Activated naive CD4-positive, alpha-beta T cell treated with anti-CD3 and anti-CD28 coated beads for 36 hours (primary cell): ENCODE measurements at regions of chrX and their contacts with region 1.

Region 1: GRCh38 chrX:48801280-48802088 is at the start of gene HDAC6:
- DNase-seq: peak; percentile 96
- H3K4me3 Mint-ChIP-seq: peak within 1 kb of the TSS; percentile 93
- H3K27ac Mint-ChIP-seq: peak within 1 kb of the TSS; percentile 98
- H3K4me1 Mint-ChIP-seq: peaks cover 13% of the 10 kb centered on the region
- H3K27me3 Mint-ChIP-seq: no peaks in the 10 kb centered on the region
- total RNA-seq, gene HDAC6: 91.1 to 99.4 TPM

Region 2: GRCh38 chrX:48475774-48476577 is 325.5 kb before region 1 on chrX and contains the start of gene FTSJ1:
- CTCF ChIA-PET with region 1: no interaction called
- intact Hi-C with region 1: loop called (anchors 10 kb)
- DNase-seq: peak; percentile 86
- H3K4me3 Mint-ChIP-seq: peak within 1 kb of the TSS; percentile 76
- H3K27ac Mint-ChIP-seq: peak within 1 kb of the TSS; percentile 90
- H3K4me1 Mint-ChIP-seq: peaks cover 32% of the 10 kb centered on the region
- H3K27me3 Mint-ChIP-seq: no peaks in the 10 kb centered on the region
- total RNA-seq, gene FTSJ1: 66.2 to 66.8 TPM

Region 3: GRCh38 chrX:48597353-48598264 is 203.9 kb before region 1 on chrX and contains the start of gene WDR13:
- CTCF ChIA-PET with region 1: no interaction called
- intact Hi-C with region 1: loop called (anchors 1 kb)
- DNase-seq: peak; percentile 94
- H3K4me3 Mint-ChIP-seq: peak within 1 kb of the TSS; percentile 97
- H3K27ac Mint-ChIP-seq: peak within 1 kb of the TSS; percentile 97
- H3K4me1 Mint-ChIP-seq: peaks cover 7% of the 10 kb centered on the region
- H3K27me3 Mint-ChIP-seq: no peaks in the 10 kb centered on the region
- total RNA-seq, gene WDR13: 37.0 to 40.1 TPM

Region 4: DNA sequence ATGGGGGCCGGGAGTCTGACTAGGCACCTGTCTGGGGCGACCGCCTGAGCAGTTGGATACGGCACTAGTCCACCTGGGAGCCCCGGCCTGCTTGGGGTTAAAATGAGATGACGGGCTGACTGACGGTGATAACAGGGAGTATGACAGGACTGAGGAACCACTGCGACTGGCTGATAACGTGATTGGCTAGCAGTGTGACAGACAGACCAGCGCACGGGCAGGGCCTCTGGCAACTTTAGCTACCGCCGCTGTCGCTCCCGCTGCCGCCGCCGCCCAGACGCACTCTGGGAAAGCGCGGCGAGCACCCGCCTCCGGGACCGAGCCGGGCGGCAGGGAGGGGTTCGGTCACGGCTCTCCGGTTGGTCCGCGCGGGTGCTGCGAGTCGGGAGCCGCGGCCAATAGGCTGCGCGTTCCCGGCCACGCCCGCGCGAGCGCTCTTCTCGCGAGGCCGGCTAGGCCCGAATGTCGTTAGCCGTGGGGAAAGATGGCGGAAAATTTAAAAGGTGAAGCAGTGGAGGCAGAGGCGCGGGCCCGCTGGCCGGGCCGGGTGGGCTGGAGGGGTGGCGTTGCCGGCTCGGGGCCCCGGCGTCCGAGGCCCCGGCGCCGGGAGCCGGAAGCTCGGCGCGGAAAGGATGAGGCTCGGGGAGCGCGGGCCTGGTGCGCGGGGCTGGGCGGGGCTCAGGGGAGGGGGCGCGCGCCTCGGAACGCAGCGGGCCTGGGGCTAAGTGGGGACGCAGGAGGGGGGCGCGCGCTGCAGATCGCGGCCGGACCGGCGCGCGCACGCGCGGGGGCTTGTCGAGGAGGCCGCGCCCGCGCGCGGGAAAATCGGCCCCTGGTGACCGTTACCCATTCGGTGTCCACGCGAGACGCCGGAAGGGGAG is 104.9 kb before region 1 on chrX and contains the start of gene SUV39H1:
- CTCF ChIA-PET with region 1: no interaction called
- intact Hi-C with region 1: loop called (anchors 1 kb)
- DNase-seq: peak; percentile 87
- H3K4me3 Mint-ChIP-seq: peak within 1 kb of the TSS; percentile 89
- H3K27ac Mint-ChIP-seq: peak within 1 kb of the TSS; percentile 91
- H3K4me1 Mint-ChIP-seq: peaks cover 36% of the 10 kb centered on the region
- H3K27me3 Mint-ChIP-seq: no peaks in the 10 kb centered on the region
- total RNA-seq, gene SUV39H1: 31.5 to 31.9 TPM

Region 5: DNA sequence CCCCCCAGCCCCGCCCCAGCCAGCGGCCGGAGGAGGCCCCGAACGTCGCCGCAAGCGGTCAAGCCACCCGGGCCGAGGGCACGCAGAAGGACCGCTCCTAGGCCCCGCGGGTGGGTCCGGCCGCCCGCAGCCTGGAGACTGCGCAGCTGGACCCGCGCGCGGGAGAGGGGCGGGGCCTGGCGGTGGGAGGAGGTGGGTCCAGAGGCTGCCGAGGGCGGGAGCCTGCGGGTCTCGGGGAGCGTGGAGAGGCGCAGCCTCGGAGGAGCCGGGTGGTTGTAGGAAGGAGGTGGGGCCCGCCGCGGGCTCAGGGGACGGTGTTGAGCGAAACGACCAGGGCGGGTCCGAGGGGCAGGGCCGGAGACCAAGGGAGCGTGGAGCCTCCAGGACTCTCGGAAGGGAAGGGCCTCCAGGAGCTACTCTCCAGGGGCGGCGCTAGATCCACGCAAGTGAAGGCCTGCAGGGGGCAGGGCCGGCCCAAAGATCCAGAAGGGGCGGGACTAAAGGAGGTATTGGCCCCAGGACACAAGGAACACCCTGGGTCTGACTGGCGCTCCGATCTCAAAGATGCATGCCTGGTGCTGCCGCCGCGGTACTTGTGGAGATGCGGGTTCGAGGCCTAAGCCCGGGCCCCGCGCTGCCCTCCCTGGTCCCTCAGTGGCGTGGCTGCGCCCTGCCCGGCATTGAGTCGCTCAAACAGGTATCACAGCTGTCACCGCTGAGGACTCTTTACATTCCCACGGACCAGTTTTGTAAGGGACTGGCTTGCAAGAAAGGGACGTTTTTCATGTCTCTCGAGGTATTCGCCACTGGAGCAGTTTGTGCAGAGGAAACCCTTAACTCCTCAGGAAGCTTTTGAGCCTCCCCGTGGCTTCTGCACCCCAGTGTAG is 90.2 kb after region 1 on chrX:
- CTCF ChIA-PET with region 1: interaction called, 3 read pairs
- intact Hi-C with region 1: loop called (anchors 2 kb)
- DNase-seq: peak; percentile 85
- H3K4me3 Mint-ChIP-seq: peak overlapping the region; percentile 80
- H3K27ac Mint-ChIP-seq: peak overlapping the region; percentile 76
- H3K4me1 Mint-ChIP-seq: peaks cover 25% of the 10 kb centered on the region
- H3K27me3 Mint-ChIP-seq: no peaks in the 10 kb centered on the region

Region 6: DNA sequence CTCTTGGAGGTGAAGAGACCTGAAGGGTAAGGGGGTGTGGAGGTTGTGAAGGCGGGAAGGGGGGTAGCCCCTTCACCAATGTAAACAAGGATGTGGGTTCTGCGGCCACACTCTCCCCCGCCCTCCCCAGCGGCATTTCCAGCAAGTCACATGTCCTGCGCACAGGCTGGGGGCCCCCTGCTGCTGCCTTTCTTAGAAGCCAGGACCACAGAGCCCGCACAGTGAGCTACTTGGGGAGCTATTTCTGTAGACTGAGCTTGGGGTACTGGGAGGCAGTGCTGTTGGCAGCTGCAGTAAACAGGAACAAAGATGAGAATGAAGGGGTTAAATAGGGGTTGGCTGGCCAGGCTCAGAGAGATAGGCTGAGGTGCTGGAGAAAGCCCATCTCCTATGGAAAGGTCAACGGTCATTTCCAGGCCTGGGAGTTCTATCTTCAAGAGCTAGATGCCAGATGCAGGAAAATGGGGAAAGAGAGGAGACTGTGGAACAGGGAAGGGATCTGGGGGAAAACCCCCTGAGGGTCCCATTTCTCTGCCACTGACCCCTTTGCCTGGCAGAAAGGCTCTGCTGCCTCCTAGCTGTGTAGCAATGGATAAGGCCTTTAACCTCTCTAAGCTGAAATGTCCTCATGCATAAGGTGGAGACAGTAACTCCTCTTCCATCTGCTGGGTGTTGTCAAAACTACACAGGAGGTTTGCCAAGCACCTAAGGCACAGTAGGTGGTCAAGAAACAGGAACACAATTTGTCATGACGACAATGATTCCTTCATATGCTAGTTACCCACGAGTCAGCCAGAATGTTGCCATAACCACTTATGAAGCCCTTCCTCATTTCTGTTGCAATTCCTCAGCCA is 135.8 kb after region 1 on chrX:
- CTCF ChIA-PET with region 1: no interaction called
- intact Hi-C with region 1: loop called (anchors 1 kb)
- DNase-seq: peak; percentile 95
- H3K4me3 Mint-ChIP-seq: peak overlapping the region; percentile 75
- H3K27ac Mint-ChIP-seq: peak overlapping the region; percentile 100
- H3K4me1 Mint-ChIP-seq: peaks cover 81% of the 10 kb centered on the region
- H3K27me3 Mint-ChIP-seq: no peaks in the 10 kb centered on the region

Region 7: GRCh38 chrX:48948589-48948988 is 147.1 kb after region 1 on chrX:
- CTCF ChIA-PET with region 1: no interaction called
- intact Hi-C with region 1: no loop called
- DNase-seq: no peak
- H3K4me3 Mint-ChIP-seq: no peak overlapping the region
- H3K27ac Mint-ChIP-seq: no peak overlapping the region
- H3K4me1 Mint-ChIP-seq: peaks cover 49% of the 10 kb centered on the region
- H3K27me3 Mint-ChIP-seq: no peaks in the 10 kb centered on the region

Region 8: DNA sequence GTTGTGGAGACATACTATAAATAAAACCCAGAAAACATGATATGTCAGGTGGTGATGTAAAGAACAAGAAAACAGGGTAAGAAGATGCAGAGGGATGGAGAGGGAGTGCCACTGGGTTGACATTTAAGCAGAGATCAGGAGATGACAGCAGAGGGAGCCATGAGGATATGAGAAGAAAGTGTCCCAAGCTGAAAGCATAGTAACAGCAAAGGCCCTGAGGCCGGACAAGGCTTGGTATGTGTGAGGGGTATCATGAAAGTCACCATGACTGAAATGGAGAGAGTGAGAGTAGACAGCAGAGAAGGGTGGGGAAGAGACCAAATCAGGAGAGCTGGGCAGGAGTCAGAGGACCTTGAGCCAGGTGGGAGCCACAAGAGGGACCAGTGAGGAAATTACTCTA is 318.6 kb after region 1 on chrX:
- CTCF ChIA-PET with region 1: no interaction called
- intact Hi-C with region 1: loop called (anchors 5 kb)
- DNase-seq: no peak
- H3K4me3 Mint-ChIP-seq: no peak overlapping the region
- H3K27ac Mint-ChIP-seq: no peak overlapping the region
- H3K4me1 Mint-ChIP-seq: peaks cover 35% of the 10 kb centered on the region
- H3K27me3 Mint-ChIP-seq: no peaks in the 10 kb centered on the region